AG04450 (cell line): ENCODE measurements at regions of chr17 and their contacts with region 1.

Region 1: GRCh38 chr17:41648411-41649195 is 24.2 kb upstream of the KRT17 start:
- DNase-seq: peak; percentile 61
- H3K4me3 ChIP-seq: peak overlapping the region; percentile 55
- H3K27ac ChIP-seq: peak overlapping the region; percentile 47
- H3K27me3 ChIP-seq: peaks cover 3% of the 10 kb centered on the region
- CTCF ChIP-seq: peak; percentile 93

Region 2: DNA sequence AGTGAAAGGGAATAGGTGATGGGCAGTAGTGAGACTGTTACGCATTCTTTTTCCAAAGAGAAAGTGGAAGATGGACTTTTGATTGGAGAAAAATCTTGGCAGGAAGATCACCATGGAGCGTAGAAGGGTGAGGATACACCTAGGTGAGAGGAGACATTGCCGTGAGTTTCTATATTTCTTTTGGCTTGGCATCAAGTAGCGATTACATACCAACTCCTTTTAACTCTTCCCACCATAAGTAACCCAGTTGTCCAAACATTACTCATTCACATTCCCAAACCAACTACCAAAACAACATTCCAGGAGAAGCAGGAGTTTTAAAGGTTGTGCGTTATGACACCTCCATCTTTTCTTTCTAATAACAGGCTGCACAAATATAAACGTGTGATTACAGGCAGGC is 838.1 kb before region 1 on chr17:
- CTCF ChIA-PET with region 1: interaction called, 11 read pairs
- POLR2A ChIA-PET with region 1: no interaction called
- DNase-seq: peak; percentile 7
- H3K4me3 ChIP-seq: no peak overlapping the region
- H3K27ac ChIP-seq: no peak overlapping the region
- H3K27me3 ChIP-seq: peaks cover 17% of the 10 kb centered on the region
- CTCF ChIP-seq: no peak

Region 3: DNA sequence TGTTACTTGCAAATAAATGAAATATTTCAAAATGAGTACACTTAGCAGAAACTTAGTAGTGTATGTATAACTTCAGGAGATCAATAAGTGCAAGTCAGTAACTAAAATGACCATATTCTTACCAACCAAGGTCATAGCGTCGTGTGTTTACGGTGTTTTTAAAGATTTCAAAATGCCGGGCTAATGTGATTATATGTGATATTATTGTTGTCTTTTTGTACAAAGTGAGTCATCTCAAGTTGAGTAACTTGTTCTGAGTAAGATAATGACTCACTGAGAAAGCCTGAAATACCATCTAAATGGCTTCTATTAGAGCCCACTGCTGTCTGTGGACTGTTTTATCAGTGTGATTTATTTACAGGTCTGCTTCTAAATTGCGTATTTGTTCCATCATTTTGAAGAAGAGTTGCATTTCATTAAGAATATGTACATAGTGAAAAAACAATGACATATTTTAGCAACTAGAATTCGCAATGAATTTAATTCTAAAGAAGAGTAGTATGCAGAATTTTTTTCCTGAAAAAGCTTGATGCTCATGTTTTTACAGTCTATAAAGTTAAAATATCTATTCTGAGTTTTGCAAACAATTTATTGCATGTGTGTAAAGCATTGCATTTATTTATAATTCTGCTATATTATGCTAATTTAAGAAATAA is 794.3 kb before region 1 on chr17:
- CTCF ChIA-PET with region 1: interaction called, 77 read pairs
- POLR2A ChIA-PET with region 1: no interaction called
- DNase-seq: peak; percentile 47
- H3K4me3 ChIP-seq: no peak overlapping the region
- H3K27ac ChIP-seq: no peak overlapping the region
- H3K27me3 ChIP-seq: no peaks in the 10 kb centered on the region
- CTCF ChIP-seq: no peak

Region 4: DNA sequence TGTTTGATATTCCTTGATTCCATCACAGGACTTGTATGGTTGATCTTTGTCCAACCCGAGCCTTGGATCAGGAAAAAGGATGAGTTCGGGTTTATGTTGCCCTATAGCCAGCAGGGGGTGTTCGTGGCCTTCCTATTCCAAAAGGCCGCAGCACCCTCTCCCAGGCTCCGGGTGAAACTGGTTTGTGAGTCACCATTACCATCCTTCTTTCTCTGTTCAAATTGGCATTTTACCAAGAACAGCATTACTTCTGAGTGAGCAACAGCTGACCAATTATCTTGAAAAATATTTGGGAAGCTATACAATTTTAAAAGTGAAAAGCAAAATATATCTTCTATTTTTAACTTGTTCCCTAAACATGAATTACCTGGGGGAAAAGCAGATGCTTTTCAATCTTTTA is 739.3 kb before region 1 on chr17:
- CTCF ChIA-PET with region 1: interaction called, 38 read pairs
- POLR2A ChIA-PET with region 1: no interaction called
- DNase-seq: peak; percentile 92
- H3K4me3 ChIP-seq: no peak overlapping the region
- H3K27ac ChIP-seq: peak overlapping the region; percentile 89
- H3K27me3 ChIP-seq: no peaks in the 10 kb centered on the region
- CTCF ChIP-seq: peak; percentile 85

Region 5: GRCh38 chr17:41559548-41559947 is 89.1 kb before region 1 on chr17:
- CTCF ChIA-PET with region 1: interaction called, 251 read pairs
- POLR2A ChIA-PET with region 1: no interaction called
- DNase-seq: no peak
- H3K4me3 ChIP-seq: no peak overlapping the region
- H3K27ac ChIP-seq: no peak overlapping the region
- H3K27me3 ChIP-seq: peaks cover 42% of the 10 kb centered on the region
- CTCF ChIP-seq: no peak

Region 6: DNA sequence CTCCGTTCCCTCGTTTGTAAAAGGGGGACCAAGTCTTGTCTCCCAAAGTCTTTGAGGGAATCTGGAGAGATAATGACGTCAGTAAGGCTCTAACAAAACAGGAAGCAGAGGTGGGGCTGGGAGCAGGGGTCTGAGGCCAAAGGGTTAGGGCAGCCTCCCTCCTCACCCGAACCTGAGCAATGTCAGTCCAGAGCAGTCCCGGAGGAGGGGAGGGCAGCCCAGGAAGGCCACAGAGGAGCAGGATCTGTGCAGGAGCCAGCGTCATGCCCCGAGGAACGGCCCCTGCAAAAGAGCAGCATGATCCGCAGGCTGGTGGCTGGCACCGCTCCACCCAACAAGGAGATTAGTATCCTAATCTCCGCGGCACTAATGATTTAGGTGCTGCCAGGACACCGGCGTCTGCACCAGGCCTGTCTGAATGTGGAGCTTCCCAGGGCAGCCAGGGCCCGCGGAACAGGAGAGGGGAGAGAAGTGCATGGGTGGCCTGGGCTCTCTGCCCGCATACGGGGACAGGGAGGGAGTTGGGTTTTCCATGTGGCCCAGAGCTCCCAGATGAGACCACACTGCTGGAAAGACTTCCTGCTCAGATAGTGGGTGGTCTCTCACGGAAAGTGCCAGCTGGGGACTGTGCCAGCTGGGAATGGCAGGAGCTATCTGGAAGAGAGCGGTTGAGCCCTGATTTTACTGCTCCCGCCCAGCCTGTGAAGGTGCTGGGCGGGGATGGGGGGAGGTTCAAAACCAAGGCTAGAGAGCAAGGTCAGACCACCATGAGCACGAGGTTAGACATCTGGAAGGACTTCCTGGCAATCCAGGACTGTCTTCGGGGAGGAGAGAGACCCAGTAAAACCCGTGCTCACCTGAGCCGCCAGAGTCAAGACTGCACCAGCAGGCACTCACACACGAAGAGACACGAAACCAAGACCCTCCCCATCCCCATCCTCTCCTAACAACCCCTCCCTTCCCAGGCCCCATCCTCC is 13.2 kb before region 1 on chr17:
- CTCF ChIA-PET with region 1: interaction called, 20 read pairs
- POLR2A ChIA-PET with region 1: no interaction called
- DNase-seq: no peak
- H3K4me3 ChIP-seq: no peak overlapping the region
- H3K27ac ChIP-seq: no peak overlapping the region
- H3K27me3 ChIP-seq: peaks cover 5% of the 10 kb centered on the region
- CTCF ChIP-seq: no peak